ENCODE measurements at regions of chr15 and their contacts with region 1.

Region 1: GRCh38 chr15:52780172-52780980 is 9.8 kb downstream of the ONECUT1 start:
- DNase-seq: peak; percentile 55 to 64
- ATAC-seq: peak; percentile 52 to 73; a peak in 4 of 6 replicates
- H3K4me3 ChIP-seq: peak overlapping the region; percentile 24; the same call in 1 of the 3 replicates
- H3K27ac ChIP-seq: no peak overlapping the region
- H3K4me1 ChIP-seq: peaks cover 7% of the 10 kb centered on the region; the same call in 2 of the 3 replicates
- CTCF ChIP-seq: peak; percentile 99
- EP300 ChIP-seq: no peak
- POLR2A ChIP-seq: no peak
- RAD21 ChIP-seq: peak; percentile 95 to 97

Region 2: DNA sequence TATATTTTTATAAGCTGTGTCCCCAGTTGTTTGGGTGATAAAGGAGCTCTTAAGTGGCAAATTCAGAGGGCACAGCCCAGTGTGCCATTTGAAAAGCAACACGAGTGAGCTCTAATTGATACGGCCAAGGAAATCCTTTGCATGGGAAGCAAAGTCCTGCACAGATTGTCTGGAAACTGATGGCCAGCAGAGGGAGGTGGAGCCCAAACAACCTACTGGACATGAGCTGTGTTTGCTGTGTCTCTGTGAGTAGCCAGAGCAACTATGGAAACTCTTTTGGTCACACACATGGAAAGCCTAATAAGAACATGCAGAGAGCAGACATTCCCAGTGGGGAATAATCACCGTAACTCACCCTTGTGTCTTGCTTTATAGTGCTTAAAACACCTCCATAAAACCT is 14.6 kb before region 1 on chr15:
- CTCF ChIA-PET with region 1: interaction called, 15 read pairs
- POLR2A ChIA-PET with region 1: no interaction called
- DNase-seq: peak in 1 of 2 experiments; percentile 44
- ATAC-seq: peak; percentile 68 to 88; a peak in 5 of 6 replicates
- H3K4me3 ChIP-seq: no peak overlapping the region
- H3K27ac ChIP-seq: no peak overlapping the region
- H3K4me1 ChIP-seq: 0 out of 3 replicates have a peak, but pooled peaks cover 4% of the 10 kb centered on the region
- CTCF ChIP-seq: peak; percentile 27; the same call in 1 of the 3 replicates
- EP300 ChIP-seq: no peak
- POLR2A ChIP-seq: no peak
- RAD21 ChIP-seq: peak in 1 of 2 experiments; percentile 59

Region 3: DNA sequence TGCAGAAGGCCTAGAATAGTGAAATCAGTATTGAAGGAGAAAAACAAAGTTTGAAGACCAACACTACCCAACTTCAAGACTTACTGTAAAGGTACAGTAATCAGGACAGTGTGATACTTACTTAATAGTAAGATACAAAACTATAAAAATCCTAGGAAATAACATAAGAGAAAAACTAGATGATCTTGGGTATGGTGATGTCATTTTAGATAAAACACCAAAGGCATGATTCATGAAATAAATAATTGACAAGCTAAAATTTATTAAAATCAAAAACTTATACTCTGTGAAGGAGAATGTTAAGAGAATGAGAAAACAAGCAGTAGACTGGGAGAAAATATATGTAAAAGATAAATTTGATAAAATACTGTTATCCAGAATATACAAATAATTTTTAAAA is 130.1 kb after region 1 on chr15:
- CTCF ChIA-PET with region 1: no interaction called
- POLR2A ChIA-PET with region 1: no interaction called
- DNase-seq: no peak
- ATAC-seq: no peak
- H3K4me3 ChIP-seq: no peak overlapping the region
- H3K27ac ChIP-seq: no peak overlapping the region
- H3K4me1 ChIP-seq: no peaks in the 10 kb centered on the region
- CTCF ChIP-seq: no peak
- EP300 ChIP-seq: no peak
- POLR2A ChIP-seq: no peak
- RAD21 ChIP-seq: no peak